Calu3 (cell line): ENCODE measurements at regions of chr19 and their contacts with region 1.

Region 1: GRCh38 chr19:45164577-45165335 is 4.0 kb upstream of the NKPD1 start:
- DNase-seq: peak; percentile 87
- H3K4me3 Mint-ChIP-seq: no peak overlapping the region
- H3K27ac Mint-ChIP-seq: no peak overlapping the region
- H3K4me1 Mint-ChIP-seq: peaks cover 33% of the 10 kb centered on the region
- H3K27me3 Mint-ChIP-seq: no peaks in the 10 kb centered on the region
- CTCF ChIP-seq: no peak

Region 2: GRCh38 chr19:45097776-45098520 is 66.8 kb before region 1 on chr19:
- CTCF ChIA-PET with region 1: no interaction called
- intact Hi-C with region 1: no loop called
- DNase-seq: peak; percentile 77
- H3K4me3 Mint-ChIP-seq: peak overlapping the region; percentile 54
- H3K27ac Mint-ChIP-seq: peak overlapping the region; percentile 96
- H3K4me1 Mint-ChIP-seq: peaks cover 81% of the 10 kb centered on the region
- H3K27me3 Mint-ChIP-seq: no peaks in the 10 kb centered on the region
- CTCF ChIP-seq: no peak

Region 3: DNA sequence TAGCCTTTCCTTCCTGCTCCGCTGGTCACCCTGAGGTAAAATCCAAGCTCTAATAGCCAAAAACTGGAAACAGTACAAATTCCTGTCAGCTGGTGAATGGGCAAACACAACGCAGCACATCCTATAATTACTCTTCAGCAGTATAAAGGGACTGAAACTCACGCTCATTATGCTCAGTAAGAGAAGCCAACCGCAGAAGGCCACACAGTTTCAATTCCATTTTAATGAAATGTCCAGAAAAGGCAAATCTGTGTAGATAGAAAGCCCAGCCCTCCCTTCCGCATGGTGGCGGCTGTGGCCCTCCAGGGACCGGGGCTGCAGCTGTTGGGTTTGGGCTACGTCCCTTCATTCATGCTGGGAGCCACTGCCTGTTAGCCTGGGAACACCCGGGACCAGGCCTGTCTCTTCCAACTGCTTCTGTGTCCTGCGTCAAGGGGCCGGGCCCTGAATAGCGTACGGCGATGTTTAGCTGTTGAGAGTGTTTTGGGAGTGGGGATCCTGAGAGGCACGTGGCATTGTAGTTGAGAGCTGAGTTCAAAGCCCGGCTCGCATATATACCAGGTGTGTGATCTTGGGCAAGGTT is 27.5 kb before region 1 on chr19:
- CTCF ChIA-PET with region 1: no interaction called
- intact Hi-C with region 1: no loop called
- DNase-seq: no peak
- H3K4me3 Mint-ChIP-seq: no peak overlapping the region
- H3K27ac Mint-ChIP-seq: no peak overlapping the region
- H3K4me1 Mint-ChIP-seq: no peaks in the 10 kb centered on the region
- H3K27me3 Mint-ChIP-seq: no peaks in the 10 kb centered on the region
- CTCF ChIP-seq: no peak

Region 4: GRCh38 chr19:45178262-45179071 is 13.7 kb after region 1 on chr19 and contains the start of gene BLOC1S3:
- CTCF ChIA-PET with region 1: interaction called, 13 read pairs
- intact Hi-C with region 1: no loop called
- DNase-seq: peak; percentile 100
- H3K4me3 Mint-ChIP-seq: peak within 1 kb of the TSS; percentile 79
- H3K27ac Mint-ChIP-seq: peak within 1 kb of the TSS; percentile 90
- H3K4me1 Mint-ChIP-seq: peaks cover 8% of the 10 kb centered on the region
- H3K27me3 Mint-ChIP-seq: no peaks in the 10 kb centered on the region
- CTCF ChIP-seq: peak; percentile 39
- total RNA-seq, gene BLOC1S3: 22.7 and 25.2 TPM in 2 replicates